ENCODE measurements at regions of chr14 and their contacts with region 1.

Region 1: DNA sequence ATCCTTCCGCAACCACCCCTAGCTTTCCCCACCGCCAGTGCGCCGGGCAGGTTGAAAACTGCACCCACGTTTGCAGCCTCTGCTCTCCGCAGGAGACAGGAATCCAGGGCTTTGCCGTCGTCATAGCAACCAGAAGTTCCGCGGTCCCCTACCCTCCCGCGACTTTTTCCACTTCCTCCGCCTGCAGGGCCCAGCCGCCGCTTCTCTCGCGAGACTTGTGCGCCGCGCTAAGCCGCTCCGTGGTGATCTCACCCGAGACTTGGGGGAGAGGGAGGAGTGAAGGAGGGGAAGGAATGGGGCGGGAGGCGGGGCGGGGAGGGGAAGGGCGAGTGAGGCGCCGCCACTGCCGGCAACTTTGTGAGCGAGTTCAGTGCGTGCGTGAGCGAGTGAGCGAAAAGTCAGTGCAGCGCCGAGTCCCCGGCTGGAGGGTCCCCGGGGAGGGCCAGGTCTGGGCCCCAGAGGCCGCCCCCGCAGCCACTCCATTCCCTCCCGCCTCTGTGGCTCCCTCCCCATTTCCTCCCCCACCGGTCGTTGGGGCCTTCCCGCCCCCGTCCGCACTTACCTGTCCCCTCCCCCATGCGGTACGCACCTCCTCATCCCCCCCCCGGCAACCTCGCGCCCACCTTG is 413.0 kb downstream of the PCNX1 start:
- DNase-seq: peak; percentile 99
- H3K4me3 Mint-ChIP-seq: peak within 1 kb of the TSS; percentile 92
- H3K27ac Mint-ChIP-seq: peak within 1 kb of the TSS; percentile 91
- H3K4me1 Mint-ChIP-seq: peaks cover 42% of the 10 kb centered on the region
- H3K27me3 Mint-ChIP-seq: no peaks in the 10 kb centered on the region

Region 2: GRCh38 chr14:69766984-69767368 is 1553.2 kb before region 1 on chr14 and contains the start of gene SRSF5:
- intact Hi-C with region 1: loop called (anchors 10 kb)
- DNase-seq: peak; percentile 93
- H3K4me3 Mint-ChIP-seq: peak within 1 kb of the TSS; percentile 96
- H3K27ac Mint-ChIP-seq: peak within 1 kb of the TSS; percentile 100
- H3K4me1 Mint-ChIP-seq: peaks cover 59% of the 10 kb centered on the region
- H3K27me3 Mint-ChIP-seq: no peaks in the 10 kb centered on the region
- total RNA-seq, gene SRSF5: 316 and 358 TPM in 2 replicates

Region 3: DNA sequence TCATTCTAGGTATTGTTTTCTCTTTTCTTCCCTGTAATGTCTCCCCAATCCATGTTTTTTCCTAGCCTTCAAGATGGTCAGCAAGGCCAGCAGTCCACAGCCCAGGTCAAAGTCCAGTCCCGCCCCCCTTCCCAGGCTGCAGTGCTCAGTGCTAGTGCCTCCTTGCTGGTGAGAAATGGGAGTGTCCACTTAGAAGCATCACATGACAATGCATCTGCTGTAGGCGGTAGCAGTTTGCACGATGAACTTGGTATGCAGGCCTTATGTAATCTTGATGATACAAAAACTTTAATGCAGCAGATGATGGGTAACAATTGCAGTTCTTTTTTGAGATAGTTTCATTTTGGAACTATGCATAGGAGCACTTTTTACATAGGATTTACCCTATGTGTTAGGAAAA is 324.5 kb before region 1 on chr14:
- intact Hi-C with region 1: no loop called
- DNase-seq: no peak
- H3K4me3 Mint-ChIP-seq: no peak overlapping the region
- H3K27ac Mint-ChIP-seq: no peak overlapping the region
- H3K4me1 Mint-ChIP-seq: peaks cover 32% of the 10 kb centered on the region
- H3K27me3 Mint-ChIP-seq: no peaks in the 10 kb centered on the region

Region 4: GRCh38 chr14:71267007-71267513 is 53.2 kb before region 1 on chr14:
- intact Hi-C with region 1: loop called (anchors 1 kb)
- DNase-seq: no peak
- H3K4me3 Mint-ChIP-seq: peak overlapping the region; percentile 41
- H3K27ac Mint-ChIP-seq: peak overlapping the region; percentile 86
- H3K4me1 Mint-ChIP-seq: peaks cover 44% of the 10 kb centered on the region
- H3K27me3 Mint-ChIP-seq: no peaks in the 10 kb centered on the region

Region 5: DNA sequence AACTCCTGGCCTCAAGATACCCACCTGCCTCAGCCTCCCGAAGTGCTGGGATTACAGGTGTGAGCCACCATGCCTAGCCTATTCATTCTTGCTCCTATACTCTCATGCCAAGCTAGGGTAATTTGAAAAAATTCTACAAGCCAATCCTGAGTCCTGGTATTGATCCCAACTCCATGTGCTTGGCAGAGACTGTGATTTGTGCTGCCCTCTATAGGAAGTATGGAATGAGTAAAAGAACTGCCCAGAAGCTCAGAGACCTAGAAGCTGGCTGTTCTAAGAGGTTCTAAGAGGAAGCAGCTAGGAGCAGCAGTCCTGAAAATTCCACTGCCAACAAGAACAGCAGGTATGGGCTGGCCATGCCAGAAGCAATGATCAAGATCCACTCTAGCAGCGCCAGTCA is 10.5 kb before region 1 on chr14:
- intact Hi-C with region 1: no loop called
- DNase-seq: no peak
- H3K4me3 Mint-ChIP-seq: no peak overlapping the region
- H3K27ac Mint-ChIP-seq: no peak overlapping the region
- H3K4me1 Mint-ChIP-seq: no peaks in the 10 kb centered on the region
- H3K27me3 Mint-ChIP-seq: peaks cover 8% of the 10 kb centered on the region

Region 6: GRCh38 chr14:71331403-71331802 is 11.2 kb after region 1 on chr14:
- intact Hi-C with region 1: loop called (anchors 1 kb)
- DNase-seq: no peak
- H3K4me3 Mint-ChIP-seq: no peak overlapping the region
- H3K27ac Mint-ChIP-seq: peak overlapping the region; percentile 65
- H3K4me1 Mint-ChIP-seq: peaks cover 58% of the 10 kb centered on the region
- H3K27me3 Mint-ChIP-seq: no peaks in the 10 kb centered on the region

Region 7: GRCh38 chr14:71346685-71347084 is 26.5 kb after region 1 on chr14:
- intact Hi-C with region 1: no loop called
- DNase-seq: no peak
- H3K4me3 Mint-ChIP-seq: no peak overlapping the region
- H3K27ac Mint-ChIP-seq: no peak overlapping the region
- H3K4me1 Mint-ChIP-seq: peaks cover 44% of the 10 kb centered on the region
- H3K27me3 Mint-ChIP-seq: no peaks in the 10 kb centered on the region

Region 8: DNA sequence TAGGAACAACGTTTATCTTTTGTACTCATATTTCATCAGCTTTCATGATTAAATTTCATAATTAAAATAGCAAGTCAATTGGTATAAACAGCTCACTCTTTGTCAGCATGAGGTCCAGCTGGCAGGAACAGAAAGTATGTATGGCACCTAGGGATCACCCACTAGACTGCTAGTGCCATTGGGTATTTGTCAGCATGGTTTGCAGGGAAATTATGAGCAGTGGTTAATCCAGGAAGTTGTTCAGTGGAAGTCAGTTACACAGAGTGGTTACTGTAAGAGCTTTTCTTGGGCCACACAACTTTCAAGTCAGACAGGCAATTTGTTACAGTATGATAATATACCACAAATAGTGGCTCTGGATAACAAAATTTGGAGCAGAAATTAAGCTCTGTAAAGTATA is 271.7 kb after region 1 on chr14:
- intact Hi-C with region 1: loop called (anchors 2 kb)
- DNase-seq: no peak
- H3K4me3 Mint-ChIP-seq: no peak overlapping the region
- H3K27ac Mint-ChIP-seq: peak overlapping the region; percentile 60
- H3K4me1 Mint-ChIP-seq: peaks cover 70% of the 10 kb centered on the region
- H3K27me3 Mint-ChIP-seq: no peaks in the 10 kb centered on the region

Region 9: DNA sequence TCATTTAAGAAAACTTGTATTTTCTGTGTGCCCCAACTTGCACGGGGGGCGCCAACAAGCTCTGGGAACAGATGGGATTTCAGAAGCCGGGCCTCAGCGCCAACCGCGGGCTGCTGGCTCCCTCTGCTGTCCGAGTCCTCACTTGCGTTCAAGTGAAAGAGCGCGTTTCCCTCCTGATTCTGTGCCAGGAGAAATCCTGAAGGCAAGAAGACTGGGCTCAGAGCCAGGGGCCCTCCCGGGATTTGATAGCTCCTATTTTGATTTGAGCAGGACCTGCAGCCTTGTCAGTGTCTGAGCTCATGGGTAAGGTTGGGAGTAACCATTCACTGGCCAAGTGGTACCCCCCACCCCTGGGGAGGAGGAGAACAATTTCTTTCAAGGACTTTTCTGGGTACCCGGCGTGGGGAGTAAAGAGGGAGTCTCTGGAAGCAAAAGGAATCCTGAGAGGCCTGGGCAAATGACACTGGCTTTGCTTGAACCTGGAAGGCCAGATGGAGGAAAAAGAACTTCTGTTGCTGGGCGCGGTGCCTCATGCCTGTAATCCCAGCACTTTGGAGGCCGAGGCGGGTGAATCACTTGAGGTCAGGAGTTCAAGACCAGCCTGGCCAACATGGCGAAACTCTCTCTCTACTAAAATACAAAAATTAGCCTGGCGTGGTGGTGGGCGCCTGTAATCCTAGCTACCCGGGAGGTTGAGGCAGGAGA is 433.1 kb after region 1 on chr14:
- intact Hi-C with region 1: loop called (anchors 2 kb)
- DNase-seq: peak; percentile 55
- H3K4me3 Mint-ChIP-seq: peak overlapping the region; percentile 26
- H3K27ac Mint-ChIP-seq: no peak overlapping the region
- H3K4me1 Mint-ChIP-seq: peaks cover 18% of the 10 kb centered on the region
- H3K27me3 Mint-ChIP-seq: peaks cover 2% of the 10 kb centered on the region